ENCODE measurements at regions of chr12 and their contacts with region 1.

Region 1: GRCh38 chr12:115632308-115632707 is 645.2 kb downstream of the MED13L start:
- DNase-seq: no peak

Region 2: GRCh38 chr12:114668151-114668885 is 964.0 kb before region 1 on chr12:
- intact Hi-C with region 1: loop called (anchors 5 kb)
- DNase-seq: peak in 9 of 10 donors; percentile 29 to 93 (median 65)

Region 3: GRCh38 chr12:115485503-115485902 is 146.8 kb before region 1 on chr12:
- intact Hi-C with region 1: no loop called
- DNase-seq: no peak

Region 4: GRCh38 chr12:115619889-115620288 is 12.4 kb before region 1 on chr12:
- intact Hi-C with region 1: loop called (anchors 1 kb)
- DNase-seq: no peak

Region 5: DNA sequence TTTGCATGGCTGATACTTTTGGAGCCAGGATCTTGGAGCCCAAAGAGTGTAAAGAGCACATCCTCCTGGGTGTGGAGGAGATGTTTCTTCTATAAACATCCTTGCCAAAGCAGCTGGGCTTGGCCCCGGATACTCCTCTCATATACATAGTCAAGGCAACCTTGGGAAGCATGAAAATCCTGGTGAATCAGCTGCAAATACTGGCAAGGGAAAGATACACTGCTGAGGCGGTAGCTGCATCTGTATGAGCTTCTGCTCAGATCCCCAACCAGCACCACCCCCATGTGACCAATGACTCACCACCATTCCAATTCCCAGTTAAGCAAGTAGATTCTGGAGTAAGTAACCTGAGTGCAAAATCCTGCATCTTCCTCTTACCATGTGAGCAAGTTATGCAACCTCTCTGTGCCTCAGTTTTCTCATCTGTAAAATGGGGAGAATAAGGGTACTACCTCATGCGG is 77.8 kb after region 1 on chr12:
- intact Hi-C with region 1: no loop called
- DNase-seq: peak in 1 of 10 donors; percentile 9

Measured in posterior cingulate gyrus (tissue), 11 donors.